AG04449 (cell line): ENCODE measurements at regions of chr2 and their contacts with region 1.

Region 1: DNA sequence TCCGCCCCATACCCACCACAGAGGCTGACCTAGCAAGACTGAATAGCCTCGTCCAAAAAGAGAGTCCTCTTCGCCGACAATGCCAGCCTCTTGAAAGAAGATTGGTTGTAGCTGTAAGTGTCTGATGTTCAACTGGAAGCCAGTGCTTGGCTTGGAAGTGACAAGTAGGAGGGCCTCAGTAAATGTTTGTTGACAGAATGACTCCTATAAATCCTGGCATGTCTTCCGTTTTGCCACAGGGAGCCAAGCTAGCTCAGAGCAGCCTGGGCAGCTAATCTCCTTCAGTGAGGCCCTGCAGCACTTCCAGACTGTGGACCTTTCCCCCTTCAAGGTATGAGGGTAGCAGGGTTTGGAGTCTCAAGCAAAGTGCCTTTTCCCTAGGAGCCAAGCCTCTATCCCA is 14.9 kb downstream of the ELMOD3 start:
- DNase-seq: no peak
- H3K4me3 ChIP-seq: no peak overlapping the region
- CTCF ChIP-seq: no peak

Region 2: GRCh38 chr2:85354286-85355072 is 15.0 kb before region 1 on chr2 and contains the starts of genes ELMOD3 and RETSAT:
- CTCF ChIA-PET with region 1: interaction called, 6 read pairs
- POLR2A ChIA-PET with region 1: interaction called, 13 read pairs
- DNase-seq: peak; percentile 97
- H3K4me3 ChIP-seq: peak within 1 kb of the TSS; percentile 91
- CTCF ChIP-seq: no peak

Region 3: DNA sequence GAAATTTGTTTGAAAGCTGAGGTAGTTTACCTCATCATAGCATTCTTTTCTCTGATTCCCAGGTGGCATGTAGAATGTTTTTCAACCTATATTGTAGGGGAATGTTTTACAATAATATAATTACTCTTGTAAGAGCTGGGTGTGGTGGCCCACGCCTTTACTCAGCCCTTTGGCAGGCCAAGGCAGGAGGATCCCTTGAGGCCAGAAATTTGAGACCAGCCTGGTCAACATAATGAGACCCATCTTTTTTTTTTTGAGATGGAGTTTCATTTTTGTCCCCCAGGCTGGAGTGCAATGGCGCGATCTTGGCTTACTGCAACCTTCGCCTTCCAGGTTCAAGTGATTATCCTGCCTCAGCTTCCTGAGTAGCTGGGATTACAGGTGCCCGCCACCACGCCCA is 250.1 kb after region 1 on chr2:
- CTCF ChIA-PET with region 1: no interaction called
- POLR2A ChIA-PET with region 1: no interaction called
- DNase-seq: no peak
- H3K4me3 ChIP-seq: no peak overlapping the region
- CTCF ChIP-seq: no peak